Naive thymus-derived CD4-positive, alpha-beta T cell (primary cell): ENCODE measurements at regions of chr17 and their contacts with region 1.

Region 1: GRCh38 chr17:2844416-2844815 is 48.2 kb downstream of the RAP1GAP2 start:
- DNase-seq: no peak
- ATAC-seq: no peak
- H3K4me3 ChIP-seq: no peak overlapping the region
- H3K4me3 Mint-ChIP-seq: no peak overlapping the region
- H3K27ac ChIP-seq: no peak overlapping the region
- H3K27ac Mint-ChIP-seq: no peak overlapping the region
- H3K4me1 ChIP-seq: peaks cover 0 to 3% of the 10 kb centered on the region in 2 donors
- H3K4me1 Mint-ChIP-seq: peaks cover 13 to 23% (median 17%) of the 10 kb centered on the region in 7 donors
- H3K27me3 ChIP-seq: no peaks in the 10 kb centered on the region
- H3K27me3 Mint-ChIP-seq: peaks cover 0 to 5% (median 4%) of the 10 kb centered on the region in 5 donors

Region 2: GRCh38 chr17:2598166-2598565 is 246.2 kb before region 1 on chr17:
- CTCF ChIA-PET with region 1: no interaction called
- POLR2A ChIA-PET with region 1: no interaction called
- intact Hi-C with region 1: no loop called
- DNase-seq: no peak
- ATAC-seq: no peak
- H3K4me3 ChIP-seq: no peak overlapping the region
- H3K4me3 Mint-ChIP-seq: peak overlapping the region in 8 of 10 donors; percentile 55 to 91 (median 74)
- H3K27ac ChIP-seq: no peak overlapping the region
- H3K27ac Mint-ChIP-seq: no peak overlapping the region
- H3K4me1 ChIP-seq: peaks cover 42 to 51% of the 10 kb centered on the region in 2 donors
- H3K4me1 Mint-ChIP-seq: peaks cover 48 to 77% (median 54%) of the 10 kb centered on the region in 7 donors
- H3K27me3 ChIP-seq: no peaks in the 10 kb centered on the region
- H3K27me3 Mint-ChIP-seq: no peaks in the 10 kb centered on the region

Region 3: GRCh38 chr17:2828397-2829038 is 15.9 kb before region 1 on chr17:
- CTCF ChIA-PET with region 1: interaction called, 3 read pairs
- POLR2A ChIA-PET with region 1: no interaction called
- intact Hi-C with region 1: loop called in 1 of 2 experiments (anchors 1 kb)
- DNase-seq: peak; percentile 48 to 85 (median 65)
- ATAC-seq: peak; percentile 92
- H3K4me3 ChIP-seq: peak overlapping the region; percentile 40
- H3K4me3 Mint-ChIP-seq: peak overlapping the region in 9 of 10 donors; percentile 30 to 82 (median 56)
- H3K27ac ChIP-seq: no peak overlapping the region
- H3K27ac Mint-ChIP-seq: peak overlapping the region in 3 of 9 donors; percentile 34 to 76 (median 68)
- H3K4me1 ChIP-seq: peaks cover 8% of the 10 kb centered on the region in 2 donors
- H3K4me1 Mint-ChIP-seq: peaks cover 23 to 34% (median 29%) of the 10 kb centered on the region in 7 donors
- H3K27me3 ChIP-seq: no peaks in the 10 kb centered on the region
- H3K27me3 Mint-ChIP-seq: peaks cover 0 to 13% (median 1%) of the 10 kb centered on the region in 5 donors

Region 4: DNA sequence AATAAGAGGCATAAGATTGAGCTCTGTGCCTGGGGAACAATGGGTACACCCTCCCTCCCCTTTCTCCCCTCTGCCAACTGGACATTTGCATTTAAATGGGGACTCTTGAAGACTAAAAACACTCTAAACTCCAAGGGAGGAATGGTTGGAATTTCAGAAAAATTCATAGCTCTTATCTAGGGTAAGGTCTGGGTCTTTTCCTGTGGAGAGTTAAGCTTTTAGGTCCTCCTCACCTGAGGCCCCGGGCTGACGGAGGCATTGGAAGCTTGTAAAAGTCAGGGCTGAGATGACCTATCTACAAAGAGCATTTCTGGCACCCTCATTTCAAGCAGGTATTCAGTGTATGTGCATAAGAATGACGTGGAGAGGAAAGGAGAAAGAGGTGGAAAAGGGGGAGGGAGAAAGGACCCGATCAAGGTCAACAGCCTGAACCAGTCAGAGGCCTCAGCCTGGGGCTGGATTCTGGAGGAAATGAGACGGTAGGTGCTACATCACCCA is 29.8 kb after region 1 on chr17:
- CTCF ChIA-PET with region 1: no interaction called
- POLR2A ChIA-PET with region 1: no interaction called
- intact Hi-C with region 1: no loop called
- DNase-seq: no peak
- ATAC-seq: no peak
- H3K4me3 ChIP-seq: no peak overlapping the region
- H3K4me3 Mint-ChIP-seq: no peak overlapping the region
- H3K27ac ChIP-seq: no peak overlapping the region
- H3K27ac Mint-ChIP-seq: peak overlapping the region in 1 of 9 donors; percentile 7
- H3K4me1 ChIP-seq: no peaks in the 10 kb centered on the region
- H3K4me1 Mint-ChIP-seq: peaks cover 0 to 24% (median 7%) of the 10 kb centered on the region in 7 donors
- H3K27me3 ChIP-seq: no peaks in the 10 kb centered on the region
- H3K27me3 Mint-ChIP-seq: no peaks in the 10 kb centered on the region

Region 5: GRCh38 chr17:2929881-2930533 is 85.6 kb after region 1 on chr17:
- CTCF ChIA-PET with region 1: interaction called, 5 read pairs
- POLR2A ChIA-PET with region 1: no interaction called
- intact Hi-C with region 1: loop called in 1 of 2 experiments (anchors 1 kb)
- DNase-seq: peak in 2 of 9 donors; percentile 3 to 12
- ATAC-seq: peak; percentile 48
- H3K4me3 ChIP-seq: no peak overlapping the region
- H3K4me3 Mint-ChIP-seq: no peak overlapping the region
- H3K27ac ChIP-seq: no peak overlapping the region
- H3K27ac Mint-ChIP-seq: no peak overlapping the region
- H3K4me1 ChIP-seq: no peaks in the 10 kb centered on the region
- H3K4me1 Mint-ChIP-seq: peaks cover 6 to 25% (median 18%) of the 10 kb centered on the region in 7 donors
- H3K27me3 ChIP-seq: no peaks in the 10 kb centered on the region
- H3K27me3 Mint-ChIP-seq: no peaks in the 10 kb centered on the region

Region 6: GRCh38 chr17:3012926-3013581 is 168.6 kb after region 1 on chr17:
- CTCF ChIA-PET with region 1: interaction called, 46 read pairs
- POLR2A ChIA-PET with region 1: interaction called, 3 read pairs
- intact Hi-C with region 1: loop called (anchors 1 kb)
- DNase-seq: peak; percentile 38 to 62 (median 53)
- ATAC-seq: peak; percentile 82
- H3K4me3 ChIP-seq: no peak overlapping the region
- H3K4me3 Mint-ChIP-seq: no peak overlapping the region
- H3K27ac ChIP-seq: no peak overlapping the region
- H3K27ac Mint-ChIP-seq: no peak overlapping the region
- H3K4me1 ChIP-seq: no peaks in the 10 kb centered on the region
- H3K4me1 Mint-ChIP-seq: peaks cover 0 to 3% (median 0%) of the 10 kb centered on the region in 7 donors
- H3K27me3 ChIP-seq: no peaks in the 10 kb centered on the region
- H3K27me3 Mint-ChIP-seq: no peaks in the 10 kb centered on the region

Region 7: GRCh38 chr17:3626831-3627768 is 782.7 kb after region 1 on chr17:
- CTCF ChIA-PET with region 1: no interaction called
- POLR2A ChIA-PET with region 1: no interaction called
- intact Hi-C with region 1: loop called in 1 of 2 experiments (anchors 10 kb)
- DNase-seq: no peak
- ATAC-seq: no peak
- H3K4me3 ChIP-seq: no peak overlapping the region
- H3K4me3 Mint-ChIP-seq: no peak overlapping the region
- H3K27ac ChIP-seq: no peak overlapping the region
- H3K27ac Mint-ChIP-seq: peak overlapping the region in 1 of 9 donors; percentile 38
- H3K4me1 ChIP-seq: no peaks in the 10 kb centered on the region
- H3K4me1 Mint-ChIP-seq: peaks cover 0 to 4% (median under 1%) of the 10 kb centered on the region in 7 donors
- H3K27me3 ChIP-seq: no peaks in the 10 kb centered on the region
- H3K27me3 Mint-ChIP-seq: no peaks in the 10 kb centered on the region